Caco-2 (cell line): ENCODE measurements at regions of chr13 and their contacts with region 1.

Region 1: GRCh38 chr13:30551189-30551588 is 66.5 kb upstream of the USPL1 start:
- DNase-seq: peak in 1 of 2 experiments; percentile 41
- H3K4me3 ChIP-seq: no peak overlapping the region
- H3K4me3 Mint-ChIP-seq: no peak overlapping the region
- H3K27ac Mint-ChIP-seq: no peak overlapping the region
- H3K4me1 ChIP-seq: no peaks in the 10 kb centered on the region
- H3K4me1 Mint-ChIP-seq: no peaks in the 10 kb centered on the region
- H3K27me3 ChIP-seq: no peaks in the 10 kb centered on the region
- H3K27me3 Mint-ChIP-seq: no peaks in the 10 kb centered on the region
- CTCF ChIP-seq: peak; percentile 33 to 61

Region 2: DNA sequence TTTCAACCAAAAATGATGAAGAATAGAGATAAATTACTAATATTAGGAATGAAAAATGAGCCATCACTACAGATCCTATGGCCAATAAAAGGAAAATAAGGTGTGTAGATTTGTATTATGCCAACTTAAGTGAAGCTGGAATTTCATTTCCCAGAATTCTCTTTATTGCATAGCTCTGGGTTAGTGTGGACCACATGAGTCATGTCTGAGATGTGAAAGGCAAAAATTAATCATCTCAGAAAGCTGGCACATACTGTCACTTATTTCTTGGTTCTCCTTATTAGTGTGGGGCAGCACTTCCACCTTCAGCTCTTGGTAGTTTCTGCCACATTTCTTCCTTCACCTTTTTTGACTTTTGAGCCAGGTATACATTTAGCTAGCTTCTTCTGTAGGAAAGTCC is 326.5 kb before region 1 on chr13:
- CTCF ChIA-PET with region 1: no interaction called
- POLR2A ChIA-PET with region 1: no interaction called
- intact Hi-C with region 1: loop called (anchors 10 kb)
- DNase-seq: no peak
- H3K4me3 ChIP-seq: no peak overlapping the region
- H3K4me3 Mint-ChIP-seq: no peak overlapping the region
- H3K27ac Mint-ChIP-seq: no peak overlapping the region
- H3K4me1 ChIP-seq: no peaks in the 10 kb centered on the region
- H3K4me1 Mint-ChIP-seq: peaks cover 6% of the 10 kb centered on the region
- H3K27me3 ChIP-seq: no peaks in the 10 kb centered on the region
- H3K27me3 Mint-ChIP-seq: no peaks in the 10 kb centered on the region
- CTCF ChIP-seq: no peak

Region 3: GRCh38 chr13:30408319-30409101 is 142.7 kb before region 1 on chr13:
- CTCF ChIA-PET with region 1: no interaction called
- POLR2A ChIA-PET with region 1: no interaction called
- intact Hi-C with region 1: loop called (anchors 1 kb)
- DNase-seq: peak; percentile 95 to 96
- H3K4me3 ChIP-seq: peak overlapping the region; percentile 19
- H3K4me3 Mint-ChIP-seq: peak overlapping the region; percentile 62
- H3K27ac Mint-ChIP-seq: peak overlapping the region; percentile 46
- H3K4me1 ChIP-seq: 0 out of 2 replicates have a peak, but pooled peaks cover 5% of the 10 kb centered on the region
- H3K4me1 Mint-ChIP-seq: no peaks in the 10 kb centered on the region
- H3K27me3 ChIP-seq: no peaks in the 10 kb centered on the region
- H3K27me3 Mint-ChIP-seq: no peaks in the 10 kb centered on the region
- CTCF ChIP-seq: peak; percentile 76 to 82

Region 4: GRCh38 chr13:30453727-30454126 is 97.5 kb before region 1 on chr13:
- CTCF ChIA-PET with region 1: no interaction called
- POLR2A ChIA-PET with region 1: no interaction called
- intact Hi-C with region 1: loop called (anchors 2 kb)
- DNase-seq: no peak
- H3K4me3 ChIP-seq: no peak overlapping the region
- H3K4me3 Mint-ChIP-seq: no peak overlapping the region
- H3K27ac Mint-ChIP-seq: no peak overlapping the region
- H3K4me1 ChIP-seq: no peaks in the 10 kb centered on the region
- H3K4me1 Mint-ChIP-seq: no peaks in the 10 kb centered on the region
- H3K27me3 ChIP-seq: no peaks in the 10 kb centered on the region
- H3K27me3 Mint-ChIP-seq: no peaks in the 10 kb centered on the region
- CTCF ChIP-seq: peak; percentile 9 to 31